ENCODE measurements at regions of chr19 and their contacts with region 1.

Region 1: GRCh38 chr19:46076951-46077816 is 36.4 kb upstream of the IGFL4 start:
- DNase-seq: peak; percentile 56
- H3K4me3 ChIP-seq: peak overlapping the region; percentile 44
- H3K27ac ChIP-seq: no peak overlapping the region
- H3K27me3 ChIP-seq: peaks cover 53% of the 10 kb centered on the region
- CTCF ChIP-seq: peak; percentile 100

Region 2: DNA sequence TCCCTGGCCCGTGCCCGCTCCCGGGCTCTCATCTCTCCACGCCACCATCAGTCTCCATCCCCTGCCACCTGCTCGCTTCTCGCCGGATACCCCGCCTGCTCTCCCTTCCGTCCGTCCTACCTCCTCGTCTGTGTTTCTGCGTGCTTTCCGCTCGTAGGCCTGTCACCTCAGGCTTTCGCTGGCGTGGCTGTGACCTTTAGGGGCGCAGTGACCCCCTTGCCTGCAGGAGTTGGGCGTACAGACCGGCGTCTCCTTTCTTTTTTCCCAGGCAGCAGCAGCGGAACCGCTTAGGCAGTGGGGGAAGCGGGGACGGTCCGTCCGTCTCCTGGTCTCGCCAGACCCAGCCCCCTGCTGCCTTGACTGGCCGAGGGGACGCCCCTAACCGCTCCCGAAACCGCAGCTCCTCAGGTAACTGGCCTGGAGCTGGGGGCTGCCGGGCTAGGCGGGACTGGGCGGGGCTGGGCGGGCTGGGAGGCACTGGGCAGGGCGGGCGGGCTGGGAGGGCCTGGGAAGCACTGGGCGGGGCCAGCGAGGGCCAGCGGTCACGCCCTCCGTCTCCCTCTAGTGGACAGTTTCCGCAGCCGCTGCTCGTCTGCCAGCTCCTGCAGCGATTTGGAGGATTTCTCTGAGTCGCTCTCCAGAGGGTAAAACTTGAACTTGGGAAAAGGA is 60.6 kb before region 1 on chr19:
- CTCF ChIA-PET with region 1: interaction called, 10 read pairs
- POLR2A ChIA-PET with region 1: no interaction called
- DNase-seq: peak; percentile 20
- H3K4me3 ChIP-seq: peak overlapping the region; percentile 59
- H3K27ac ChIP-seq: no peak overlapping the region
- H3K27me3 ChIP-seq: peaks cover 18% of the 10 kb centered on the region
- CTCF ChIP-seq: peak; percentile 79

Region 3: DNA sequence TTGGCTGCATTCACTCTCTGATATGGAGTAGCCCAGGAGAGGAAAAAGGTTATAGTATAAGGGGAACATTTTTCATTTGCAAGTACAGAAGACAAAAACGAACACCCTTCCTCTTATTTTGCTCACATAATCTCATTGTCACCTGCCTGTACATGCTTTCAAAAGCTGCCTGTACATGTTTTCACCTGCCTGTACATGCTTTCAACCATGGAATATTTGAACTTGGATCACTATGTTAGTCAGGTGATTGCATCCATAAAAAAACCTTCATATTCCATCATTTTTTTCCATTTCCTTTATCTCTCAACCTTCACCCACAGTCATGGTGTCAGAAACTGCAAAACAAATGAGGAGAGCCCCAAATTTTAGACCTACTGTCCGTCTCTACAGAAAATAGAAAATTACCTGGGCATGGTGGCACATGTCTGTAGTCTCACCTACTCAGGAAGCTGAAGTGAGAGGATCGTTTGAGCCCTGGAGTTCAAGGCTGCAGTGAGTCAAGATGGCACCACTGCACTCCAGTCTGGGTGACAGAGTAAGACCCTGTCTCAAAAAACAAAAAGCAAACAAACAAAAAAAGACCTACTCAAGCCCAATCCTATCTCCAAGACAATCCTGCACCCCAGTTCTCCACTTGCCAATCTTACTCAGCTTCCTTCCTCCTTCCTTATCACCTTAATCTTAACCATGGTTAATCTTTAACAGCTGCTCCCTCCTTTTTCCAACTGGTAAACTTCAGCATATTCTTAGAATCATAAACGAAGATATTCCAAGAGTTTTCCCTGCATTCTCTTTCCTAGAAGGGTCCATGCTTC is 82.4 kb after region 1 on chr19:
- CTCF ChIA-PET with region 1: no interaction called
- POLR2A ChIA-PET with region 1: no interaction called
- DNase-seq: no peak
- H3K4me3 ChIP-seq: no peak overlapping the region
- H3K27ac ChIP-seq: no peak overlapping the region
- H3K27me3 ChIP-seq: peaks cover 23% of the 10 kb centered on the region
- CTCF ChIP-seq: no peak

Region 4: GRCh38 chr19:46189971-46190888 is 113.0 kb after region 1 on chr19:
- CTCF ChIA-PET with region 1: interaction called, 16 read pairs
- POLR2A ChIA-PET with region 1: no interaction called
- DNase-seq: no peak
- H3K4me3 ChIP-seq: no peak overlapping the region
- H3K27ac ChIP-seq: no peak overlapping the region
- H3K27me3 ChIP-seq: peaks cover 57% of the 10 kb centered on the region
- CTCF ChIP-seq: no peak

Region 5: GRCh38 chr19:46265217-46265828 is 188.1 kb after region 1 on chr19:
- CTCF ChIA-PET with region 1: interaction called, 122 read pairs
- POLR2A ChIA-PET with region 1: no interaction called
- DNase-seq: peak; percentile 57
- H3K4me3 ChIP-seq: no peak overlapping the region
- H3K27ac ChIP-seq: no peak overlapping the region
- H3K27me3 ChIP-seq: peaks cover 35% of the 10 kb centered on the region
- CTCF ChIP-seq: peak; percentile 78

Measured in AG04450 (cell line).